ENCODE measurements at regions of chr5 and their contacts with region 1.

Region 1: GRCh38 chr5:60494635-60495034 is 205.3 kb downstream of the DEPDC1B start:
- DNase-seq: no peak
- ATAC-seq: no peak
- H3K4me3 ChIP-seq: no peak overlapping the region
- H3K27ac ChIP-seq: peak overlapping the region; percentile 44
- H3K4me1 ChIP-seq: peaks cover 95% of the 10 kb centered on the region
- H3K27me3 ChIP-seq: no peaks in the 10 kb centered on the region
- CTCF ChIP-seq: no peak
- EP300 ChIP-seq: no peak
- POLR2A ChIP-seq: no peak
- RAD21 ChIP-seq: no peak

Region 2: DNA sequence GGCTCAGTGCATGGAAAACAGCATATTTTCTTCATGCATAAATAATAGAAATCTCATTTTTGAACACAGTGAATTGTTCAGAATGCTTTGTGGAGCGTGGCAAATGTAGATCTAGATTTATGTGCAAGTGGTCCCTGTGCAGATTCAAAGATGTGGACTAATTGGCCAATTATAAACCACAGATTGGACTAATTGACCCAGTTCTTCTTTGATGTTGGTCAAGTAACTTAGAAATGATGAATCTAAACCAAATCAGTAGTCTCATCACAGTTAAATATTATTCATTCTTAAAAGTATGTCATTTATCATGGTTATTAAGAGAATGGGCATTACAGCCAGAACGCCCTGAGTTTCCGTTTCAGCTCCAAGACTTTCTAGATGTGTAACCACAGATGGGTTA is 589.4 kb before region 1 on chr5:
- CTCF ChIA-PET with region 1: no interaction called
- POLR2A ChIA-PET with region 1: no interaction called
- in situ Hi-C with region 1: no loop called
- intact Hi-C with region 1: no loop called
- DNase-seq: no peak
- ATAC-seq: no peak
- H3K4me3 ChIP-seq: no peak overlapping the region
- H3K27ac ChIP-seq: no peak overlapping the region
- H3K4me1 ChIP-seq: no peaks in the 10 kb centered on the region
- H3K27me3 ChIP-seq: no peaks in the 10 kb centered on the region
- CTCF ChIP-seq: no peak
- EP300 ChIP-seq: no peak
- POLR2A ChIP-seq: no peak
- RAD21 ChIP-seq: no peak

Region 3: DNA sequence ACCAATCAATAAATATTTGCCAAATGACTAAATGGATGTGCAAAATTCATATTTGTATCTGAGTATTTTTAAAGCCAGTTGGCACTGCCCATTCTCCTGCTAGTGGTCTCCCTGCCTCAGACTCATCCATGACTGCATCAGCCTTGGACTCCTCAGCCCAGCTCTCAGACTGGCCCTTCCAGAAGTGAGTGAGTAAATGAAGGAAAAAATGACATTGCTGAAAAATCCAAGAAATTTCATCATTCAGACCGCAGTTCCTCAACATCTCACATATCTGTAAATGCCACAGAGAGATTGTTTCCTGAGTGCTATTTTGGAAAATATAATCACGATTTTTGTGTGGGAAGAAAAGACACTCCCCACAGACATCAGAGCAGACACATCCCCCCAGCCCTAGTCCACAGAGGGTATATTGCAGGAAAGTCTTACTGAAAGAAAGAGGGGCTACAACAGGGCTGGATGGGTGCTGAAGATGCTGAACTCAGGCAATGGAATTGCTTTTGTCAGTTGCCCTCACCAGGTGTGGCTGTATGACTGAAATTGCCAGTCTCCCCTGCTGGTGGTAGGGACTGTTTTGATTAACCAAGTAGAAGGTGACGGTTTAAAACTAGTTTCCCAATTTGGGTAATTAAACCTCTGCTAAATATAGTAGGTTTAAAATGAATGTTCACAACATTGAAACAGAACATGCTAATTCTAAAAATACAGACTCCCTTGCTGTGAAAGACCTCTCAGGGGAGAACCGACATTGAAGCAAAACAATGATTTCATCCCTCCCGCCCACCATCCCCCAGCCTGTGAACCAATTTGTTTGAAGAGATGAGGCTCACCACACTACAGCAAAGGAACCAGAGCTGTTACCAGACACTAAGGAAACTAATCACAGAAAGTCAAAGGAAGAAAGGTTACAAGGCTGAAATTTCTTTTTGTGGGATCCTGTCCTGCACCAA is 46.5 kb after region 1 on chr5:
- CTCF ChIA-PET with region 1: no interaction called
- POLR2A ChIA-PET with region 1: no interaction called
- in situ Hi-C with region 1: no loop called
- intact Hi-C with region 1: loop called (anchors 5 kb)
- DNase-seq: peak; percentile 32
- ATAC-seq: no peak
- H3K4me3 ChIP-seq: no peak overlapping the region
- H3K27ac ChIP-seq: peak overlapping the region; percentile 14
- H3K4me1 ChIP-seq: peaks cover 42% of the 10 kb centered on the region
- H3K27me3 ChIP-seq: no peaks in the 10 kb centered on the region
- CTCF ChIP-seq: no peak
- EP300 ChIP-seq: no peak
- POLR2A ChIP-seq: no peak
- RAD21 ChIP-seq: no peak

Region 4: DNA sequence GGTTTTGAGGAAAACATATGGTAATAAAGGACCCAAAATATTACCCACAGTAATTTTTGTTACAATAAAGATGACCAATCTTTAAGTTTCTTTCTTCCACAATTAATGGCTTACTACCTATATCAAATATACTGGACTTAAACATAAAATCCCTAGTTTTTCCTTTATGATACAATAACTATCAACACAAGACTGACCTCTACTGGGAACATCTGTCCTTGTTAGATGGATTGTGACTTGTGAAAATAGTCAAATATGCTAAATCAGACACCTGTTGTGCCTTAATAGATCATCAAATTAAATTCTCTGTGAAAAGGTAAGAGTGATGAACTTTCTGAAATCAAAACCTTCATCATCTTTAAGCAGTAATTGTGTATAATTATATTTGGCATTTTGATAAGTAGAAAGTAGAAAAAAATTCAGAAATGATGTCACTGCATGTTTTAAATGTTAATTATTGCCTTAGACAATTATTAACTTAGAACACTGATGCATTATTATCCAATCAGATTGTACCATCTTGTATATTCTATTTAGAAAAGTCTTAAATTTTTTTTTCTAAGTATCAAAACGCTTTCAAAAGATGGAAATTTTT is 91.8 kb after region 1 on chr5:
- CTCF ChIA-PET with region 1: no interaction called
- POLR2A ChIA-PET with region 1: no interaction called
- in situ Hi-C with region 1: no loop called
- intact Hi-C with region 1: loop called (anchors 10 kb)
- DNase-seq: peak; percentile 54
- ATAC-seq: 0 out of 3 replicates have a peak, but pooled peaks have one; percentile 30
- H3K4me3 ChIP-seq: no peak overlapping the region
- H3K27ac ChIP-seq: no peak overlapping the region
- H3K4me1 ChIP-seq: peaks cover 12% of the 10 kb centered on the region; the same call in 1 of the 2 replicates
- H3K27me3 ChIP-seq: no peaks in the 10 kb centered on the region
- CTCF ChIP-seq: peak; percentile 67
- EP300 ChIP-seq: no peak
- POLR2A ChIP-seq: no peak
- RAD21 ChIP-seq: peak; percentile 62

Measured in HepG2 (cell line).